ENCODE measurements at regions of chr6 and their contacts with region 1.

Region 1: DNA sequence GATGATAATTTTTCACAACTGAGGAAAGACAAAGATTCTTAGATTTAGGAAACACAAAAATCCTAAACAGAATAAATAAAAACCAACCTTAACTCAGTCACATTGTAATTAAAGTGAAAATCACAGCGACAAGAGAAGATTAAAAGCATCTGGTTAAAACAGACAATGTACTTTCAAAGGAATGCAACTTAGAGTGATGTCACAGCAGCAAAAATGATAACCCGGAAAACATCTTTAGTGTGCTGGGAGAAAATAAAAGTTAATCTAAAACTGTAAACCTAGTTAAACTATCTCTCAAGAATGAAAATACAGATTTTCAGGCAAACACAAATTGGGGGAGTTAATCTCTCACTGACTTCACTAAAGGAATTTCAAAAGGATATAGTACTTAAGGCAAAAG is 76.8 kb upstream of the OGFRL1 start:
- DNase-seq: no peak
- H3K4me3 Mint-ChIP-seq: no peak overlapping the region
- H3K27ac Mint-ChIP-seq: no peak overlapping the region
- H3K4me1 Mint-ChIP-seq: no peaks in the 10 kb centered on the region
- H3K27me3 Mint-ChIP-seq: peaks cover 3% of the 10 kb centered on the region

Region 2: DNA sequence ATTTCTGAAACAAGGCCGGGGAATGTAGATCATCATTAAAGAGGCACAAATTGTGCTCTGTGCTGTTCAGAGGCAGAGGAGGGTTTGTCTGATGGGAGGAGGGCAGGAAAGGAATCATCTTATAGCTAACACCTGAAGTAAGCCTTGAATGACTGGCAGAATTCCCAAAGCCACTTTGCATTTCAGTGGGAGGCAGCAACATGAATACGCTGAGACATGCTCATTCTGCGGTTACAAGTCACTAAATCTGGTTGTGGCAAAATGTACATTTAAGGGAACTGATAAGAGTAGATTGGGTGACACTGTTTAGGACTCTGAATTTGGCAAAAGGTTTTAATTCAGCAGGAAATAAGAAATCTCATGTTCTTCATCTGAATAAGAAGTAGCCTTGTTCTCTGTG is 1349.8 kb before region 1 on chr6:
- CTCF ChIA-PET with region 1: no interaction called
- POLR2A ChIA-PET with region 1: no interaction called
- intact Hi-C with region 1: loop called (anchors 5 kb)
- DNase-seq: no peak
- H3K4me3 Mint-ChIP-seq: no peak overlapping the region
- H3K27ac Mint-ChIP-seq: no peak overlapping the region
- H3K4me1 Mint-ChIP-seq: peaks cover 13% of the 10 kb centered on the region
- H3K27me3 Mint-ChIP-seq: peaks cover 4% of the 10 kb centered on the region

Region 3: DNA sequence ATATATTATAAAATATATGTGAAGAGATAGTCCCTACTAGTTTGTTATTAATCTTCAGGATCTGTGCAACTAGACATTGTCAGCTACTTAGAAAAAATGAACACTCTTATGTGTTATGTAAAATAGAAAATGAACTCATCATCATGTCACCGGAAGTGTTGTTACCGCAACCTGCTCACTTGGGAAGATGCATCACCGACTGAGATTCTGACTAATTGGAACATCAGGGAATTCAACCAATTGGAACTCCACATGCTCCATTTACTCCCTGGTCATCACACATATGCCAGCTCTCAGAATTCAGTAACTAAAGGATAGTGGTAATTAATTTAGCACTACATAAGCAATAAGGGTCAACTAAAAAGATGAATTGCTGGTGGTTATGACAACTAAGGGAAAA is 238.2 kb before region 1 on chr6:
- CTCF ChIA-PET with region 1: no interaction called
- POLR2A ChIA-PET with region 1: no interaction called
- intact Hi-C with region 1: no loop called
- DNase-seq: no peak
- H3K4me3 Mint-ChIP-seq: no peak overlapping the region
- H3K27ac Mint-ChIP-seq: no peak overlapping the region
- H3K4me1 Mint-ChIP-seq: no peaks in the 10 kb centered on the region
- H3K27me3 Mint-ChIP-seq: peaks cover 38% of the 10 kb centered on the region

Region 4: DNA sequence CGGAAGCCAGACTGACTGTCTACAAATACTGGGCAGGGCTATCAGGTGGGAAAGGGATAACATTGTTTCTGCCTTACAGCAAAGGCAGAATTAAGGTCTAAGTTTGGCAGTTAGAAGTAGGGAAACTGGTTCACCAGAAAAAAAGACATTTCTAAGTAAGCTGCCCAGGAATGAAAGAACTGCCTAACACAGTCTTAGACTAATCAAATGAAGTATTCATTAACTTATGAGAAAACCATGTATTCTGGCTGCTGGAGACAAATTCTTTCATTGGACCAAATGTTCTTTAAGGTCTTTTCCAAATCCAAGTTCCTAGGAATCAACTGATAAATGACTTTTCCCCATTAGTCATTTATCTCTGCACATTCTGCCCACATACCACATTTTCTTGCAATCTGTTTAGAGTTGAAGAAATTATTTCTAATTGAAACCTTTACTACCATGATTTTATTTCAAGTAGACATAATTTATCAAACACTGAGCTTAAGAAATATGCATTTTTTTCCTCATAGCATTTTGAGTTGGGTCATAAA is 43.5 kb before region 1 on chr6:
- CTCF ChIA-PET with region 1: no interaction called
- POLR2A ChIA-PET with region 1: no interaction called
- intact Hi-C with region 1: no loop called
- DNase-seq: no peak
- H3K4me3 Mint-ChIP-seq: no peak overlapping the region
- H3K27ac Mint-ChIP-seq: no peak overlapping the region
- H3K4me1 Mint-ChIP-seq: no peaks in the 10 kb centered on the region
- H3K27me3 Mint-ChIP-seq: peaks cover under 1% of the 10 kb centered on the region